ENCODE measurements at regions of chr11 and their contacts with region 1.

Region 1: DNA sequence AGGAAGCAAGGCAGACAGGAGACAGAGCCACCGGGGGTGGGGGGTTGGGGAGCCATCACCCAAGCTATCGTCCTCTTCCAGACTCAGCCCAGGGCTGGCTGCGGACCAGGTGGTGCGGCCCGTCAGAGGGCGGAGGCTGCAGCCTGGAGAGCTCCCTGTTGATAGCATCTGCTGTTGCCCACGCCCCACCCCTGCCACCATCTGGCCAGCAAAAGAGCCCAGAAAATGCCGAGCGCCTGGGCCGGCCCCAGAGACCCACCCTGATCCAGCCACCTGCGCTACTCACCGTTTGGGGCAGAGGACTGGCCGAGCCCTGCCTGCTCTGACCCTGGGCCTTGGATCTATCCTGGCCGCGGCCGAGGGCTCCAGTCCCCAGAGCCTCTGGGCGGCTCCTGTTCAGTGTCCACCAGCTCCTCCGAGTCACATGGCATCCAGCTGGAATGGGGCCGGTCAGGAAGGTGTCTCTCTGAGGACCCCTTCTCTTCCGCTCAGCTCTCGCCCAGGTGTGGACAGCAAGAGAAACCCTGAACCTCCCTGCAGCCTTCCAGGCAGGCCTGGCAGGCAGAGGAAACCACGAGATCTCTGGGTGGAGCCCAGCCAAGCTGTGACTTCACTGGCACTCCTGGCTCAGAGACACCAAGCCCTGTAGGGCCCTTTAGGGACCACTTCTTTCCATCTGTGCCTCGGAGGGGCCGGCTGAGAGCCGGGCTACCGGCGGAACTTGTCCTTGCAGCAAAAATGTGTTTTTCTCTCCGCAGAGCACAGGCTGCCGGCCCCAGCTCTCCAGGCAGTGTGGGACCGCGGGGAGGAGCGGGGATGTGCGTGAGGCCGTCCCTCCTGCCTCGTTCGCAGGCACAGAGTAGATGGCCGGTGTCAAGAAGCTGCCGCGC is at the start of gene MRGPRE:
- DNase-seq: no peak
- ATAC-seq: peak in 1 of 2 donors; percentile 27
- H3K4me3 ChIP-seq: peak within 1 kb of the TSS in 3 of 4 donors; percentile 7 to 25 (median 17)
- H3K27ac ChIP-seq: no peak within 1 kb of the TSS
- H3K4me1 ChIP-seq: no peaks in the 10 kb centered on the region
- H3K27me3 ChIP-seq: peaks cover 10 to 20% (median 18%) of the 10 kb centered on the region in 3 donors
- CTCF ChIP-seq: no peak
- POLR2A ChIP-seq: no peak
- total RNA-seq, gene MRGPRE: not detected

Region 2: GRCh38 chr11:3106736-3107524 is 125.2 kb before region 1 on chr11:
- in situ Hi-C with region 1: no loop called
- intact Hi-C with region 1: no loop called
- DNase-seq: peak in 1 of 2 donors; percentile 8
- ATAC-seq: no peak
- H3K4me3 ChIP-seq: no peak overlapping the region
- H3K27ac ChIP-seq: no peak overlapping the region
- H3K4me1 ChIP-seq: no peaks in the 10 kb centered on the region
- H3K27me3 ChIP-seq: no peaks in the 10 kb centered on the region
- CTCF ChIP-seq: no peak
- POLR2A ChIP-seq: no peak

Region 3: GRCh38 chr11:3412837-3413236 is 180.7 kb after region 1 on chr11:
- in situ Hi-C with region 1: loop called in 1 of 4 experiments (anchors 25 kb)
- intact Hi-C with region 1: no loop called
- DNase-seq: no peak
- ATAC-seq: no peak
- H3K4me3 ChIP-seq: no peak overlapping the region
- H3K27ac ChIP-seq: no peak overlapping the region
- H3K4me1 ChIP-seq: no peaks in the 10 kb centered on the region
- H3K27me3 ChIP-seq: peaks cover 0 to 12% (median 0%) of the 10 kb centered on the region in 3 donors
- CTCF ChIP-seq: no peak
- POLR2A ChIP-seq: no peak

Measured in gastrocnemius medialis (tissue), 4 donors.